Aorta (tissue), 5 donors: ENCODE measurements at regions of chr2 and their contacts with region 1.

Region 1: GRCh38 chr2:189412330-189412953 is 28.8 kb upstream of the WDR75 start:
- DNase-seq: no peak
- ATAC-seq: peak; percentile 88
- H3K4me3 ChIP-seq: no peak overlapping the region
- H3K27ac ChIP-seq: peak overlapping the region in 1 of 2 donors; percentile 28
- H3K4me1 ChIP-seq: no peaks in the 10 kb centered on the region
- H3K27me3 ChIP-seq: no peaks in the 10 kb centered on the region

Region 2: GRCh38 chr2:188524519-188525113 is 887.8 kb before region 1 on chr2:
- intact Hi-C with region 1: loop called (anchors 5 to 10 kb)
- DNase-seq: no peak
- ATAC-seq: peak; percentile 82
- H3K4me3 ChIP-seq: no peak overlapping the region
- H3K27ac ChIP-seq: no peak overlapping the region
- H3K4me1 ChIP-seq: no peaks in the 10 kb centered on the region
- H3K27me3 ChIP-seq: no peaks in the 10 kb centered on the region

Region 3: DNA sequence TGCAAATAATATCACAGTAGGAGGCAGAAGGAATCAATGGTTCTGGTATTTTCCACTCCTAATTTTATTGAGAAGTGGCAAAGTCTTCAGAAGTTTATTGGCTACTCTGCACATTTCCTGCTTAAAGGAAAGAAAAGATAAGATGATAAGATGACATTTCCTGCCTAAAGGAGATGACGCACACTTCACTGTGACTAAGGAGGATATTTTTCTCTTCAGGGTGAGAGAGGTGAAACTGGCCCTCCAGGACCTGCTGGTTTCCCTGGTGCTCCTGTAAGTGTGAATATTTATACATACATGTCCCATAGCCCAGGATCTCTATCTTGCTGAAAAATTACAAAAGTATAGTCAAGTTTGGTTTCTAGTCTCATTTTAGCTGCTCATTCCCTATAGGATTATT is 410.4 kb before region 1 on chr2:
- intact Hi-C with region 1: loop called in 1 of 2 experiments (anchors 10 kb)
- DNase-seq: no peak
- ATAC-seq: no peak
- H3K4me3 ChIP-seq: no peak overlapping the region
- H3K27ac ChIP-seq: no peak overlapping the region
- H3K4me1 ChIP-seq: no peaks in the 10 kb centered on the region
- H3K27me3 ChIP-seq: no peaks in the 10 kb centered on the region

Region 4: DNA sequence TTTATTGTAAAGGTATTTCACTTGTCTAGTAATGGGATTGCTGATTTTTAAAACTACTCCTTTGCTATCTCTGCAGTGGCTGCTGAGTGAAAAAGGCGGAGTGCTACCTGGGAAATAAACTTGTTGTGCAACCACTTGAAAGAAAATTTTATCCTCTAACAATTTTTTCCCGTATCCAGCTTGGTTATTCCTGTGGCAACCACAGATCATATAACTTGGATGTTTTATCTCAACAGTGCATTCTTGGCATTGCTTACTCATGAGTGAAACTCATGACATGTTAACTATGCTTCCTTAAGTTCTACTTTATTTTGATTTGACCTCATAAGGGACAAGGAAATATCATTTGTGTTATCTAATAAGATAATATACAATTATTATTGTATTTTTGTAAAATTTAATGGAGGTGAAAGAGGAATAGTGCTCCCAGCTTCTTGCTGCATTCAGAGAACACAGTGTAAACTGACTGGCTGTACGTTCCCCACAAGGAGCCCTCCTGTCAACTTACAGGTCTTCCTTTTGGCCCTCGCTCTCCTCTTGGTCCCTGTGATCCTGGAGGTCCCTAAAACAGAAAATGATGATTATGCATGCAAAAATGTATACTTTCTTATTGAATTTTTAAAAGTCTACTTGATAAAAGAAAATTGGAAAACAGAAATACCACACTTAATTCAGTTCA is 315.5 kb before region 1 on chr2:
- intact Hi-C with region 1: loop called (anchors 1 to 5 kb)
- DNase-seq: no peak
- ATAC-seq: no peak
- H3K4me3 ChIP-seq: no peak overlapping the region
- H3K27ac ChIP-seq: no peak overlapping the region
- H3K4me1 ChIP-seq: peaks cover 0 to 1% of the 10 kb centered on the region in 2 donors
- H3K27me3 ChIP-seq: no peaks in the 10 kb centered on the region

Region 5: DNA sequence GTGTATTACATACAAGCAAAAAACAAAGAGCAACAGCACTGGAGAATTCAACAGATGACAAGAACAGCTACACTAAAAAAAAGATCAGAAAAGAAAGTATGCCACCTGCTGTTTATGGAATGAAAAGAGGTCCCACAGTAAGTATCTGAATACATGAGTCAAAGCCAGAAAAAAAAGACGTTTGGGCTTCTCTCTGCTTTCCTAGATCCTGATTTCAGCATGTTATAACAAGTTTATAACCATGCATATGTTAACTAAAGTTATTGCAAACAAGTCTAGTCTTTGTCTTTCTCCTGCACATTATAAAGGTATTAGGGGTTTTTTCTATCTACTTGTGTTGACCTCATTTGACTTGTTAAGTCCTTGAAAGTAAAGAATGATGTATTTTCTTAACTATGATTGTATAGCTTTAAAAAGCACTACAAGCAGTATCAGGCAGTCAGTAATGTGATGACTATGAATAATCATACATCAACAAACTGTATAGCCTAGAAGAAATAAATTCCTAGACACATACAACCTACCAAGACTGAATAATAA is 124.4 kb before region 1 on chr2:
- intact Hi-C with region 1: loop called in 1 of 2 experiments (anchors 5 kb)
- DNase-seq: no peak
- ATAC-seq: peak; percentile 86
- H3K4me3 ChIP-seq: no peak overlapping the region
- H3K27ac ChIP-seq: no peak overlapping the region
- H3K4me1 ChIP-seq: peaks cover 0 to 8% of the 10 kb centered on the region in 2 donors
- H3K27me3 ChIP-seq: no peaks in the 10 kb centered on the region

Region 6: DNA sequence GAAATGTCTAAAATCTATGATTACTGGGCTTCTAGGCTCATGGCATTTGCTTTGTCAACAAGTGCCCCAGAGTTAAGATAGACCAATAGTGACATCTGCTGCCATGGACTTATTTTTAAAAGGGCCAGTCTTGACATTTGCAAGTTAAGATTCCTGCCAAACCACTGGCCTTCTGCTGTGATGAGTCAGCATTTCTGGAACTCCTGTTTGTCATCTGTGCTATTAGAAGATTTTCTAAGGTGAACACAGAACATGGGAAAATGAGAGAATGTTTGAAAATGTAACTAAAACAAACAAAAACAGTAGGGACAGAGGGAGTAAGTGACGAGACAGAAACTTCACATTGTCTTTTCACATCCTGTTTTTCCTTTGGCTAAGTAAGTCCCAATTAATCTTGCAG is 64.9 kb before region 1 on chr2:
- intact Hi-C with region 1: loop called in 1 of 2 experiments (anchors 10 kb)
- DNase-seq: no peak
- ATAC-seq: peak; percentile 84
- H3K4me3 ChIP-seq: no peak overlapping the region
- H3K27ac ChIP-seq: no peak overlapping the region
- H3K4me1 ChIP-seq: no peaks in the 10 kb centered on the region
- H3K27me3 ChIP-seq: no peaks in the 10 kb centered on the region

Region 7: DNA sequence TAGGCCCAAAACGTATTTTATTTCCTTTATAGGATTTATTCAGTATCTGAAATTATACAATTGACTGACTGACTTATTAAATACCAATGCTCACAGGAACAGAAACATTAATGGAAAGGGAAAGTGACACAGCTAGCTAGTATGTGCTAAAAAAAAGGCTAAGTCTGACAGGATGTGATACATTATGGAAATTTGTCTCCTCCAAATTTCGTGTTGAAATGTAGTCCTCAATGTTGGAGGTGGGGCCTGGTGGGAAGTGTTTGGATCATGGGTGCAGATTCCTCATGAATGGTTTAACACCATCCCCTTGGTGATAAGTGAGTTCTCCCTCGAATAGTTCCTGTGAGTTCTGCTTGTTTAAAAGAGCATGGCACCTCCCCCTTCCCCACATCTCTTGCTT is 41.7 kb before region 1 on chr2:
- intact Hi-C with region 1: loop called (anchors 5 kb)
- DNase-seq: peak; percentile 54 to 76
- ATAC-seq: no peak
- H3K4me3 ChIP-seq: no peak overlapping the region
- H3K27ac ChIP-seq: peak overlapping the region; percentile 46 to 82
- H3K4me1 ChIP-seq: peaks cover 0 to 5% of the 10 kb centered on the region in 2 donors
- H3K27me3 ChIP-seq: no peaks in the 10 kb centered on the region